HCT116 (cell line): ENCODE measurements at regions of chr18 and their contacts with region 1.

Region 1: GRCh38 chr18:47313901-47314300 is 62.4 kb upstream of the SKOR2 start:
- DNase-seq: no peak
- ATAC-seq: no peak
- H3K4me3 ChIP-seq: no peak overlapping the region
- H3K27ac ChIP-seq: no peak overlapping the region
- H3K4me1 ChIP-seq: no peaks in the 10 kb centered on the region
- H3K27me3 ChIP-seq: peaks cover 49% of the 10 kb centered on the region
- CTCF ChIP-seq: no peak
- POLR2A ChIP-seq: no peak
- RAD21 ChIP-seq: no peak

Region 2: GRCh38 chr18:47370052-47370451 is 56.2 kb after region 1 on chr18:
- CTCF ChIA-PET with region 1: no interaction called
- POLR2A ChIA-PET with region 1: no interaction called
- RAD21 ChIA-PET with region 1: no interaction called
- intact Hi-C with region 1: loop called (anchors 10 kb)
- DNase-seq: no peak
- ATAC-seq: no peak
- H3K4me3 ChIP-seq: no peak overlapping the region
- H3K27ac ChIP-seq: no peak overlapping the region
- H3K4me1 ChIP-seq: no peaks in the 10 kb centered on the region
- H3K27me3 ChIP-seq: peaks cover 43% of the 10 kb centered on the region
- CTCF ChIP-seq: no peak
- POLR2A ChIP-seq: no peak
- RAD21 ChIP-seq: no peak